ENCODE measurements at regions of chr14 and their contacts with region 1.

Region 1: GRCh38 chr14:73627151-73627558 is 14.8 kb downstream of the ACOT6 start:
- DNase-seq: no peak
- ATAC-seq: no peak
- H3K4me3 ChIP-seq: no peak overlapping the region
- H3K27ac ChIP-seq: no peak overlapping the region
- H3K4me1 ChIP-seq: no peaks in the 10 kb centered on the region
- H3K27me3 ChIP-seq: no peaks in the 10 kb centered on the region
- CTCF ChIP-seq: no peak
- EP300 ChIP-seq: no peak
- POLR2A ChIP-seq: no peak
- RAD21 ChIP-seq: no peak

Region 2: GRCh38 chr14:73616831-73617230 is 10.3 kb before region 1 on chr14:
- CTCF ChIA-PET with region 1: no interaction called
- POLR2A ChIA-PET with region 1: interaction called, 11 read pairs
- RAD21 ChIA-PET with region 1: no interaction called
- SMC1A ChIA-PET with region 1: interaction called, 3 read pairs
- in situ Hi-C with region 1: no loop called
- intact Hi-C with region 1: no loop called
- DNase-seq: no peak
- ATAC-seq: no peak
- H3K4me3 ChIP-seq: no peak overlapping the region
- H3K27ac ChIP-seq: no peak overlapping the region
- H3K4me1 ChIP-seq: no peaks in the 10 kb centered on the region; the same call in 1 of the 2 replicates
- H3K27me3 ChIP-seq: peaks cover 2 to 4% of the 10 kb centered on the region in 2 experiments; a peak in 2 of 4 replicates
- CTCF ChIP-seq: no peak
- EP300 ChIP-seq: no peak
- POLR2A ChIP-seq: no peak
- RAD21 ChIP-seq: no peak

Region 3: DNA sequence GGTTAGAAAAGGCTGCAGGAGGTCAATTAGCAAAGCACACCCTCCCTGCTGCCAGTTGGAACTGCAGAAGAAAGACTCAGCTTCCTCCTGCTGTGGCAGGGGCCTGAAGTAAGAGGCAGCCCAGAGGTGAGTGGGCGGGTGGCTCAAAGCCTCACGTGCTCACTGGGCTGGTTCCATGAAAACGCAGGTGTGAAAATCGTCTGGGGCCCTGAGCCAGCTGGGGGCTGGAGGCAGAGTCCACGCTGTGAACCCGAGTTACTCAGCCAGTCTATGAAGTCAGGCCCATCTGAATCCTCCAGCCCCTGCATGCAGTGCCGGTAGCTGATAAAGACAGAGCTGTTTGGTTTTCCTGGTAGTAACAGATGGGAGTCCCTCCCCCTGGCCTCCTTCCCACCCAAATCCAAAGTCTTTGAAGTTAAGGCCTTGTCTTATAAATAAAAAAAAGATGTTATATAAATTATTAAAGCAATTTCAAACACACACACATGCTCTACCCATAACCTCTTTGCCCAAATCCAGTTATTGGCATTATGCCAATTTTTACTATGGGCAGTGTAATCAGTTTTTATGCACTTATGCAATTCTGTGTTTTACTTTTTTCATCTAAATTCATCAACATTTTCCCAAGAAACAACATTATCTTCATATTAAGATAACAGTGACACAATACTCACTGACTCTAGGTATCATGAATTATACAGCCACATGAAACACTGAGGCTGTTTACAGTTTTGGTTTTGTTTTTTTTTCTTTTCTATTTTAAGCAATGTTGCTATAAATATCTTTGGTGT is 144.9 kb after region 1 on chr14:
- CTCF ChIA-PET with region 1: no interaction called
- POLR2A ChIA-PET with region 1: no interaction called
- RAD21 ChIA-PET with region 1: no interaction called
- SMC1A ChIA-PET with region 1: no interaction called
- in situ Hi-C with region 1: no loop called
- intact Hi-C with region 1: no loop called
- DNase-seq: peak; percentile 85
- ATAC-seq: peak; percentile 76
- H3K4me3 ChIP-seq: peak overlapping the region; percentile 65; the same call in 1 of the 2 replicates
- H3K27ac ChIP-seq: peak overlapping the region; percentile 93
- H3K4me1 ChIP-seq: peaks cover 71% of the 10 kb centered on the region
- H3K27me3 ChIP-seq: no peaks in the 10 kb centered on the region
- CTCF ChIP-seq: peak in 2 of 3 experiments; percentile 0 to 16; a peak in 1 of 6 replicates
- EP300 ChIP-seq: peak; percentile 73 to 81; a peak in 3 of 4 replicates
- POLR2A ChIP-seq: peak; percentile 82
- RAD21 ChIP-seq: no peak